ENCODE measurements at regions of chr2 and their contacts with region 1.

Region 1: GRCh38 chr2:70871398-70872211 is 36.0 kb upstream of the CD207 start:
- DNase-seq: peak; percentile 82 to 90 (median 87)
- H3K4me3 ChIP-seq: peak overlapping the region in 1 of 7 experiments; percentile 26
- H3K27ac ChIP-seq: no peak overlapping the region
- H3K4me1 ChIP-seq: peaks cover 0 to 8% (median 2%) of the 10 kb centered on the region in 4 experiments
- H3K27me3 ChIP-seq: peaks cover 11 to 58% (median 34%) of the 10 kb centered on the region in 5 experiments

Region 2: DNA sequence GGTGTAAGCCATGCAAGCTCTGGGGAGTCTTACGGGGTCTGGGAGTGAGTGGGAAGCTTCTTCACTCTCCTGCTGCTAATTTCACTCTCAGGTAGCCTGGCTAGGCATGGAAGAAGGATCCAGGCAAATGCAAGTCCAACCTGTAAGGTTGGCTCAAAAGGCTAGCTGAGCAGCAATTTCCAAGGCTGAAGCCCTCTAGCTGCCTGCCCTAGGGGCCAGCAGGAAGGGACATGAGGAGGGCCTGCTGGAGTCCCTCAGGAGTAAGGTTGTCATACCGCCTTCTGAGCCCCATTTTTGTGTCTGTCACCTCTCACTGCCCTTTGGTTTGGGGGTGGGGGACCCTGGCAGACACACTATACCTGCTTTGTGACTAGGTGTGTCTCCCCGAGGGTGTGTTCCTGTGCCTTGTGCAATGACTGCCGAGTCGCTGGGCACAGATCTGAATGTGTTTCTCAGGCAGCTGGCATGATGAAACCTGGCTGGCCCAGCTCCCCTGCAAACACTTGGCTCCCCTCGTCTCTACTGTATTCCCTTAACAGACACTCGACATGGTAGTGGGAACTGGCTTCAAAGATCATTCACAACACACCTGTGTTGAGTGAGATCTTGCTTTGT is 445.8 kb before region 1 on chr2:
- CTCF ChIA-PET with region 1: no interaction called
- POLR2A ChIA-PET with region 1: no interaction called
- DNase-seq: no peak
- H3K4me3 ChIP-seq: no peak overlapping the region
- H3K27ac ChIP-seq: no peak overlapping the region
- H3K4me1 ChIP-seq: no peaks in the 10 kb centered on the region
- H3K27me3 ChIP-seq: peaks cover 0 to 2% (median 0%) of the 10 kb centered on the region in 5 experiments

Region 3: GRCh38 chr2:70789304-70790135 is 82.1 kb before region 1 on chr2:
- CTCF ChIA-PET with region 1: interaction called, 32 read pairs
- POLR2A ChIA-PET with region 1: no interaction called
- DNase-seq: peak; percentile 75 to 83 (median 82)
- H3K4me3 ChIP-seq: peak overlapping the region in 4 of 7 experiments; percentile 11 to 56 (median 46)
- H3K27ac ChIP-seq: no peak overlapping the region
- H3K4me1 ChIP-seq: peaks cover 0 to 15% (median 6%) of the 10 kb centered on the region in 4 experiments
- H3K27me3 ChIP-seq: peaks cover 30 to 74% (median 38%) of the 10 kb centered on the region in 5 experiments

Region 4: GRCh38 chr2:70850925-70851324 is 20.7 kb before region 1 on chr2:
- CTCF ChIA-PET with region 1: interaction called, 17 read pairs
- POLR2A ChIA-PET with region 1: no interaction called
- DNase-seq: no peak
- H3K4me3 ChIP-seq: no peak overlapping the region
- H3K27ac ChIP-seq: no peak overlapping the region
- H3K4me1 ChIP-seq: peaks cover 0 to 13% (median 0%) of the 10 kb centered on the region in 4 experiments
- H3K27me3 ChIP-seq: peaks cover 0 to 4% (median 0%) of the 10 kb centered on the region in 5 experiments

Region 5: GRCh38 chr2:70919672-70920366 is 48.2 kb after region 1 on chr2:
- CTCF ChIA-PET with region 1: interaction called, 169 read pairs
- POLR2A ChIA-PET with region 1: no interaction called
- DNase-seq: peak; percentile 73 to 83 (median 74)
- H3K4me3 ChIP-seq: no peak overlapping the region
- H3K27ac ChIP-seq: no peak overlapping the region
- H3K4me1 ChIP-seq: no peaks in the 10 kb centered on the region
- H3K27me3 ChIP-seq: peaks cover 0 to 24% (median 10%) of the 10 kb centered on the region in 5 experiments

Region 6: DNA sequence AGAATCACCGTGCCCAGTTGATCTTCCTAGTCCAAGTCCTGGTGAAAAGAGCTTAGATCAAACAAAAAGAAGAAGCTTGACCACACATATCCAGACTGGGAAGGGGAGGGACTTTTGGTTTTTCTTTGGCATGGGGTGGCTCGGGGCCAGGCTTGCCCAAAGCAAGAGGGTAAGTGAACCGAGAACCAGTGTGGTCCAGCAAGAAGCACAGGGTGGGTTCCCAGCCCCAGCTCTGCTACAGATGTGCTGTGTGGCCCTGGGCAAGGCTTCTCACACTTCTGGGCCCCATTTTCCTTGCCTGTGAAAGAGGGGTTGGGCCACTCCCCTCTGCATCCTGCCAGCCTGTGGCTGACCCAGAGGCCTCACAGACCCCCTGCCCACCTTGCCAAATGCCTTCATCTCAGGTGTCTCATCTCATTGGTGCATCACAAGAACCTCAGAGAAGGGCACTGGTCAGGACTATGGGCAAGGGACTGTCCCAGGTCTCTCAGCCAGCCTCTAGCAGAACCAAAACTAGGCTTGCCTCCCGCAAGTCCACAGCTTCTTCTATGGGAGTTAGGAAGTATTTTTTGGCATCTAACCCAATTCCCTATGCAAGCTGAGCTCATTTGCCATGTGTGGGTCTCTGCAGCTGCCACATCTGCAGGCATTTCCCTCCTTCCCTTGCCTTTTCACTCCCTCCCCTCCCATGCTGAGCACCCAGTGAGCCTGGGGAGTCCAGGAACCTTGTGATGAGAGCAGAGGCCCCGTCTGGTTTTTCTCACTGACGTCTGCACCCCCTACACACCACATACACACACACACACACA is 71.0 kb after region 1 on chr2:
- CTCF ChIA-PET with region 1: interaction called, 62 read pairs
- POLR2A ChIA-PET with region 1: no interaction called
- DNase-seq: no peak
- H3K4me3 ChIP-seq: no peak overlapping the region
- H3K27ac ChIP-seq: no peak overlapping the region
- H3K4me1 ChIP-seq: peaks cover 0 to 8% (median 3%) of the 10 kb centered on the region in 4 experiments
- H3K27me3 ChIP-seq: peaks cover 2 to 38% (median 16%) of the 10 kb centered on the region in 5 experiments

Region 7: DNA sequence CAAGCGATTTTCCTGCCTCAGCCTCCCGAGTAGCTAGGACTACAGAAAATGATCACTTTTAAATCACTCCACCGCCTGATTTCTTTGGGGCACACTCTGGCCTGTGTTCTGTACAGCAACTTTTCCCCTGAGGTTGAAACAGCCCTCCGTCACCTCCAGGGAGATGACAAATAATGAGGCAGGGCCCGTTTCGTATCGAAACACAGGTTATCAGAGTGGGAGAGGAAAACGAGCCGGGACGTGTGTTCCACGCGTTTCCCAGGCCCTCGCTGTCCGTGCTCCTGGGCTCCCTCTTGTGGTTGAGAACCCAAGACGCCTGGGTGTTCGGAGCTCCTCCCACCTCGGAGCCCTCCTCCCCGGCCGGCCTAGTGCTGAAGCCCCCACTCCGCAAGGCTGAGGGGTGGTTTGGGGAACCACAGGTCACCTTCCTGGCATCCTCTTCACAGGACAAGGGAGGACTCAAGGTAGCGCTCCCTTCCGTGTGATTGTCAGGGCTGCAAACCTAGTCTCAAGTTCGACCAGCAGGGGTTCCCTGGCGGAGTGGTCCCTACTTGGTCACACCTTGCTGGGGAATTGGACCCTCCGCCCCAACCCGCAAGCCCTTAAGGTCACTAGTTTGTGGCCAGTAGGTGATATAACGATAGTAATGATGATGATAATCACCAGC is 76.9 kb after region 1 on chr2:
- CTCF ChIA-PET with region 1: interaction called, 62 read pairs
- POLR2A ChIA-PET with region 1: no interaction called
- DNase-seq: peak; percentile 70 to 79 (median 74)
- H3K4me3 ChIP-seq: peak overlapping the region in 4 of 7 experiments; percentile 33 to 65 (median 40)
- H3K27ac ChIP-seq: no peak overlapping the region
- H3K4me1 ChIP-seq: peaks cover 0 to 18% (median 9%) of the 10 kb centered on the region in 4 experiments
- H3K27me3 ChIP-seq: peaks cover 3 to 16% (median 11%) of the 10 kb centered on the region in 5 experiments

Region 8: DNA sequence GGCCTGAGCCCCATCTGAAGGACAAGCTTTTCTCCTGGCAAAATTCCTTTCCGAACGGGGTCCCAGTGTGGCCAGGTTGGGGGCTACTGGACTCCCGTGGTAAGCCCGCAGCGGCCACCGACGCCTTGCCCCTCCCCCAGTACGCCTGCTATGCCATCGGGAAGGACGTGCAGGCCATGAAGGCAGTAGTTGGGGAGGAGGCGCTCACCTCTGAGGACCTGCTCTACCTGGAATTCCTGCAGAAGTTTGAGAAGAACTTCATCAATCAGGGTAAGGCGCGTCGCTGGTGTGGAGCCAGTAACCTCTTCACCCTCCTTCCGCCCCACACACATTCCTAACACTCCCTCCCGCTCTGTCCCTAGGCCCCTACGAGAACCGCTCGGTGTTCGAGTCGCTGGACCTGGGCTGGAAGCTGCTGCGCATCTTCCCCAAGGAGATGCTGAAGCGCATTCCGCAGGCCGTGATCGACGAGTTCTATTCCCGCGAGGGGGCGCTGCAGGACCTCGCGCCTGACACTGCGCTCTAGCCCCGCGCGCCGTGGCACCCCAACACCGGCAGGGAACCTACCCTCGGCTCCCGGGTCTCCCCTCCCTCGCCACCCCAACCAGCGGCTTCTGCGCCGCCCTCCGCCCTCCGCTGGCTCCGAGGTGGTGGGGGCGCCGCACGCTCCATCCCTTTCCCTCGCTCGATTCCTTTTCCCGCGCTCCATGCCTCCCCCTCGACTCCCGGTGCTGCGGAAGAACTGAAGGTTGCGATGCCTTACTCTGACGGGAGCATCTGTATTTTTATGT is 93.2 kb after region 1 on chr2:
- CTCF ChIA-PET with region 1: interaction called, 10 read pairs
- POLR2A ChIA-PET with region 1: no interaction called
- DNase-seq: peak; percentile 77 to 83 (median 82)
- H3K4me3 ChIP-seq: peak overlapping the region; percentile 32 to 77 (median 60)
- H3K27ac ChIP-seq: no peak overlapping the region
- H3K4me1 ChIP-seq: peaks cover 0 to 9% (median 8%) of the 10 kb centered on the region in 4 experiments
- H3K27me3 ChIP-seq: peaks cover 3 to 45% (median 17%) of the 10 kb centered on the region in 5 experiments

Measured in common myeloid progenitor, CD34-positive (primary cell).